RWPE1 (cell line): ENCODE measurements at regions of chr17 and their contacts with region 1.

Region 1: DNA sequence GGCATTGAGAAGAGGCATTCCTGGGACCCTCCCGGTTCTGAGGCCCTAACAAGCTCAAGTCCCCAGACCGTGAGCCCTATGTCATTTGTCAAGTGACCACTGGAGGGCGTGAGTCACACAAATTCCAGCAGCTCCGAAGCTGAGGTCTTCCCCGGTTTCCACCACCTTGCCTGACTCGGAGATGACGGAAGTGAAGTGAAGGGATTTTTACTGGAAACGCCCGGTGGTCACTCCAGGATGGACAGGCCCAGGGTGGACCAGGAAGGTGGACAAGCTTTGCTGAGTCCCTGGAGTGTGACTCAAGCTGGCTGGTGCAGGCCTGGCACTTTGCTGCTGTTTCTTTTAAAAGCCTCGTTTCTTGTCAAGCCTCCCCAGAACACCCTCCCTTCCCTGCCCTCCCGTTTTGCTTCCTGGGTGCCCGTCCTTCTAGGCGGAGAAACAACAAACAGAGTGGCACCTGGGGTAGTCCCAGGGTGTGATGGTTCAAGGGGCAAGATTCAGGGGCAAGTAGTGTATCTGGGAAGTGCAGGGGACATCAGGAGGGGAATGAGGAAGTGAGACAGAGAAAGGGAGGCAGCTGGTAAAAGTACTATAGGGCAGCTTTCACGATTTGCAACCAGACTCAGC is 5.3 kb upstream of the NOS2 start:
- DNase-seq: peak; percentile 83
- H3K27ac ChIP-seq: no peak overlapping the region
- CTCF ChIP-seq: peak; percentile 78

Region 2: DNA sequence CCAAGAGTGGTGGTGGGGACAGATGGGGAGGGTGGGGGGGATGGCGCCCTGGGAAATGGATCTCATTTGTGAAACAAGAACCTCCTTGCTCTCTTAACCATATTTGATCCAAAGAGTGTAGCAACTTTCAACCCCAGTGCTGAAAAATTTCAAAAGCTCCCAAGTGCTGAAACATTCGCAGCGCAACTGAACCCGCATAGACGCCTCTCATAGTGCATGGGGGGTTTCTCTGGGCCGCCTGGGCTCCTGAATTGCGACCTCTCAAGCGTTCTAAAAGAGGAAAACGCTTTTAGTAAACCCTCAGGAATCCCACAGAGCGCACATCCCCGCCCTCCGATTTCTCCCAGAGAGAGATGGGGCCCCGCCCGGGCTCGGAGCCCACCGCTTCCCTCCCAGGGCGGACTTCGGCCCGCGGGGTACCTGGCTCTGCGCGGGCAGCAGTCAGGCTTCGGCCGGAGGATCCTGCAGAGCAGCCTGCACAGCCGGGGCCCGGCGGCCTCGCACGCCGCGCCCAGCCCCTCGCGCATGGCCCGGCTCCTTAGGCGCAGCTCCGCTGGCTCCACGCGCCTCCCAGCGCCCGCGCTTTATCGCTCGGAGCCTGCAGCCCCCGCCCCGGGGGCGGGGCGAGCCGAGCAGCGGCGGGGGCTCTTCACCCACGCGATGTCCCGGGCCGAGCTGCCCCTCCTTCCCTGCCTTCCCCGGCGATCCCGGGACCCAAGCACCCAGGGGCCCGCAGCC is 12.3 kb before region 1 on chr17:
- CTCF ChIA-PET with region 1: interaction called, 11 read pairs
- POLR2A ChIA-PET with region 1: no interaction called
- DNase-seq: no peak
- H3K27ac ChIP-seq: no peak overlapping the region
- CTCF ChIP-seq: no peak